ENCODE measurements at regions of chr7 and their contacts with region 1.

Region 1: DNA sequence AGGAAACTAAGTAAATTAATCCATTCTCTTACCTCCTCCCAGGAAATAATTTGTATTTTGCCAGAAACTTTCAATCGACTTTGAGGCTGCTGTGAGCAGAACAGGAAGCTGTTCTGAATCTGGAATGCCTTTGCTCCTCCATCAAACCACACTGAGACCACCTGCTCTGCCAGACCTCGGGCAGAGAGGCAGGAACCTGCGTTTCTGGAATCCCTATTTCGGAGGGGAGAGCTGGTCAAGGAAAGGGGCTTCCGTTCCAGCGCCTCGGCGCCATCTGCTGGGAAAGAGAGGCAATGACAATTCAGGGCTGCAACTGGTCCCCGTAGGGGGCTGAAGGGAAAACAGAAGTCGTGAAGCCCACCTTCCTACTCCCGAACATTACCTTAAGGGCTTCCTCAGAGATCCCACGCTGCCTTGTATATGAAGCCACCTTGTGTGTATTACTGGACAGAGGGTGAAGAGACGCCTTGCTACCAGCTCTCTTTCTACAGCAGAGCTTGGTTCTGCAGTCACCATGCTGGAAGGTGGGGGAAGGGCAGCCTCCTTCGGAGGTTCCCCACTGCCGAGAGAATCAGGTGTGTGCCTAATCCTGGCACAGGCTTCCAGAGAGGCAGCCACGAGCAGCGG is 31.2 kb downstream of the ZNF467 start:
- DNase-seq: peak in 8 of 9 donors; percentile 32 to 64 (median 44)
- ATAC-seq: peak; percentile 79
- H3K4me3 ChIP-seq: peak overlapping the region; percentile 51
- H3K4me3 Mint-ChIP-seq: peak overlapping the region; percentile 70 to 88 (median 79)
- H3K27ac ChIP-seq: no peak overlapping the region
- H3K27ac Mint-ChIP-seq: peak overlapping the region in 2 of 9 donors; percentile 7 to 43
- H3K4me1 ChIP-seq: peaks cover 7 to 9% of the 10 kb centered on the region in 2 donors
- H3K4me1 Mint-ChIP-seq: peaks cover 10 to 14% (median 11%) of the 10 kb centered on the region in 7 donors
- H3K27me3 ChIP-seq: peaks cover 0 to 4% of the 10 kb centered on the region in 2 donors
- H3K27me3 Mint-ChIP-seq: peaks cover 35 to 51% (median 43%) of the 10 kb centered on the region in 5 donors

Region 2: GRCh38 chr7:149239345-149240191 is 502.6 kb before region 1 on chr7 and contains the start of gene ZNF212:
- CTCF ChIA-PET with region 1: no interaction called
- POLR2A ChIA-PET with region 1: no interaction called
- intact Hi-C with region 1: loop called in 1 of 2 experiments (anchors 1 kb)
- DNase-seq: peak; percentile 75 to 89 (median 84)
- ATAC-seq: peak; percentile 100
- H3K4me3 ChIP-seq: peak within 1 kb of the TSS; percentile 90
- H3K4me3 Mint-ChIP-seq: peak within 1 kb of the TSS; percentile 85 to 95 (median 92)
- H3K27ac ChIP-seq: peak within 1 kb of the TSS; percentile 76
- H3K27ac Mint-ChIP-seq: peak within 1 kb of the TSS; percentile 71 to 89 (median 87)
- H3K4me1 ChIP-seq: peaks cover 14 to 16% of the 10 kb centered on the region in 2 donors
- H3K4me1 Mint-ChIP-seq: peaks cover 23 to 43% (median 33%) of the 10 kb centered on the region in 7 donors
- H3K27me3 ChIP-seq: no peaks in the 10 kb centered on the region
- H3K27me3 Mint-ChIP-seq: peaks cover 0 to 6% (median 0%) of the 10 kb centered on the region in 5 donors
- total RNA-seq, gene ZNF212: 10.4 to 20.6 (median 13.3) TPM

Region 3: GRCh38 chr7:149662591-149663095 is 79.5 kb before region 1 on chr7:
- CTCF ChIA-PET with region 1: interaction called, 15 read pairs
- POLR2A ChIA-PET with region 1: interaction called, 5 read pairs
- intact Hi-C with region 1: loop called (anchors 1 kb)
- DNase-seq: peak; percentile 17 to 72 (median 38)
- ATAC-seq: peak; percentile 89
- H3K4me3 ChIP-seq: no peak overlapping the region
- H3K4me3 Mint-ChIP-seq: no peak overlapping the region
- H3K27ac ChIP-seq: no peak overlapping the region
- H3K27ac Mint-ChIP-seq: no peak overlapping the region
- H3K4me1 ChIP-seq: no peaks in the 10 kb centered on the region
- H3K4me1 Mint-ChIP-seq: no peaks in the 10 kb centered on the region
- H3K27me3 ChIP-seq: no peaks in the 10 kb centered on the region
- H3K27me3 Mint-ChIP-seq: peaks cover 27 to 57% (median 42%) of the 10 kb centered on the region in 5 donors

Region 4: DNA sequence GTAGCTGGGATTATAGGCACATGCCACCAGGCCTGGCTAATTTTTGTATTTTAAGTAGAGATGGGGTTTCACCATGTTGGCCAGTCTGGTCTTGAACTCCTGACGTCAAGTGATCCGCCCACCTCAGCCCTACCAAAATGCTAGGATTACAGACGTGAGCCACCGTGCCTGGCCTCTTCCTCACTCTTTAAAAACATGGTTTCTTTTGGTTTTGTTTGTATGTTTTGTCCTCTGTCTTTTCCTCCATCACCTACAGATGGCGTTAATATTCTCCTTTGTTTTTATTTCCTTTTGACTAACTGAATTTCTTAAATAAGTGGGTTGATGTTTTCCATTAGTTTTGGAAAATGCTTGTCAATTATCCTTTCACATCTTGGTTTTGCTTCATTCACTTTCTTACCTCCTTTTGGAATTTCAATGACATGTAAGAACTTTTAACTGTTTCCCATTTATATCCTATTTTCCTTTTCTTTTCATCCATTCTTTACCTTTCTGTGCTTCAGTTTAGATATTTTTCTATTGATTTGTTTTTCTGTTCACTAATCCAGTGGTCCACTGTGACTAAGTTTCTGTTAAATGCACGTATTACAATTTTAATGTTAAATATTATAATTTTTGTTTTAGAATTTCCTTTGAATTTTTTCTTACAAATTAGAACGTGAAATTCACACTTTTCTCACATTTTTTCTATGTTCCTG is 72.9 kb before region 1 on chr7:
- CTCF ChIA-PET with region 1: interaction called, 10 read pairs
- POLR2A ChIA-PET with region 1: no interaction called
- intact Hi-C with region 1: loop called in 1 of 2 experiments (anchors 1 kb)
- DNase-seq: peak in 4 of 9 donors; percentile 3 to 21 (median 8)
- ATAC-seq: no peak
- H3K4me3 ChIP-seq: no peak overlapping the region
- H3K4me3 Mint-ChIP-seq: no peak overlapping the region
- H3K27ac ChIP-seq: no peak overlapping the region
- H3K27ac Mint-ChIP-seq: no peak overlapping the region
- H3K4me1 ChIP-seq: no peaks in the 10 kb centered on the region
- H3K4me1 Mint-ChIP-seq: peaks cover 0 to 4% (median 0%) of the 10 kb centered on the region in 7 donors
- H3K27me3 ChIP-seq: no peaks in the 10 kb centered on the region
- H3K27me3 Mint-ChIP-seq: peaks cover 27 to 66% (median 41%) of the 10 kb centered on the region in 5 donors

Region 5: GRCh38 chr7:149714050-149714909 is 27.9 kb before region 1 on chr7:
- CTCF ChIA-PET with region 1: interaction called, 3 read pairs
- POLR2A ChIA-PET with region 1: no interaction called
- intact Hi-C with region 1: loop called in 1 of 2 experiments (anchors 2 kb)
- DNase-seq: peak; percentile 68 to 89 (median 84)
- ATAC-seq: peak; percentile 99
- H3K4me3 ChIP-seq: peak overlapping the region; percentile 75
- H3K4me3 Mint-ChIP-seq: peak overlapping the region; percentile 71 to 87 (median 80)
- H3K27ac ChIP-seq: peak overlapping the region; percentile 72
- H3K27ac Mint-ChIP-seq: peak overlapping the region in 4 of 9 donors; percentile 5 to 72 (median 54)
- H3K4me1 ChIP-seq: peaks cover 10 to 13% of the 10 kb centered on the region in 2 donors
- H3K4me1 Mint-ChIP-seq: peaks cover 12 to 26% (median 19%) of the 10 kb centered on the region in 7 donors
- H3K27me3 ChIP-seq: no peaks in the 10 kb centered on the region
- H3K27me3 Mint-ChIP-seq: peaks cover 0 to 4% (median 0%) of the 10 kb centered on the region in 5 donors

Region 6: GRCh38 chr7:149799397-149800171 is 57.4 kb after region 1 on chr7:
- CTCF ChIA-PET with region 1: interaction called, 5 read pairs
- POLR2A ChIA-PET with region 1: no interaction called
- intact Hi-C with region 1: loop called in 1 of 2 experiments (anchors 5 kb)
- DNase-seq: peak; percentile 32 to 73 (median 58)
- ATAC-seq: peak; percentile 58
- H3K4me3 ChIP-seq: no peak overlapping the region
- H3K4me3 Mint-ChIP-seq: no peak overlapping the region
- H3K27ac ChIP-seq: no peak overlapping the region
- H3K27ac Mint-ChIP-seq: peak overlapping the region in 1 of 9 donors; percentile 28
- H3K4me1 ChIP-seq: no peaks in the 10 kb centered on the region
- H3K4me1 Mint-ChIP-seq: no peaks in the 10 kb centered on the region
- H3K27me3 ChIP-seq: no peaks in the 10 kb centered on the region
- H3K27me3 Mint-ChIP-seq: no peaks in the 10 kb centered on the region

Region 7: GRCh38 chr7:149822353-149822943 is 80.3 kb after region 1 on chr7:
- CTCF ChIA-PET with region 1: no interaction called
- POLR2A ChIA-PET with region 1: no interaction called
- intact Hi-C with region 1: no loop called
- DNase-seq: no peak
- ATAC-seq: no peak
- H3K4me3 ChIP-seq: no peak overlapping the region
- H3K4me3 Mint-ChIP-seq: no peak overlapping the region
- H3K27ac ChIP-seq: no peak overlapping the region
- H3K27ac Mint-ChIP-seq: no peak overlapping the region
- H3K4me1 ChIP-seq: no peaks in the 10 kb centered on the region
- H3K4me1 Mint-ChIP-seq: no peaks in the 10 kb centered on the region
- H3K27me3 ChIP-seq: no peaks in the 10 kb centered on the region
- H3K27me3 Mint-ChIP-seq: no peaks in the 10 kb centered on the region

Region 8: GRCh38 chr7:150788474-150789269 is 1046.5 kb after region 1 on chr7:
- CTCF ChIA-PET with region 1: no interaction called
- POLR2A ChIA-PET with region 1: no interaction called
- intact Hi-C with region 1: no loop called
- DNase-seq: no peak
- ATAC-seq: no peak
- H3K4me3 ChIP-seq: no peak overlapping the region
- H3K4me3 Mint-ChIP-seq: no peak overlapping the region
- H3K27ac ChIP-seq: no peak overlapping the region
- H3K27ac Mint-ChIP-seq: no peak overlapping the region
- H3K4me1 ChIP-seq: no peaks in the 10 kb centered on the region
- H3K4me1 Mint-ChIP-seq: peaks cover 0 to 12% (median 0%) of the 10 kb centered on the region in 7 donors
- H3K27me3 ChIP-seq: no peaks in the 10 kb centered on the region
- H3K27me3 Mint-ChIP-seq: peaks cover 0 to 18% (median 4%) of the 10 kb centered on the region in 5 donors

Measured in naive thymus-derived CD4-positive, alpha-beta T cell (primary cell).